ENCODE measurements at regions of chr19 and their contacts with region 1.

Region 1: DNA sequence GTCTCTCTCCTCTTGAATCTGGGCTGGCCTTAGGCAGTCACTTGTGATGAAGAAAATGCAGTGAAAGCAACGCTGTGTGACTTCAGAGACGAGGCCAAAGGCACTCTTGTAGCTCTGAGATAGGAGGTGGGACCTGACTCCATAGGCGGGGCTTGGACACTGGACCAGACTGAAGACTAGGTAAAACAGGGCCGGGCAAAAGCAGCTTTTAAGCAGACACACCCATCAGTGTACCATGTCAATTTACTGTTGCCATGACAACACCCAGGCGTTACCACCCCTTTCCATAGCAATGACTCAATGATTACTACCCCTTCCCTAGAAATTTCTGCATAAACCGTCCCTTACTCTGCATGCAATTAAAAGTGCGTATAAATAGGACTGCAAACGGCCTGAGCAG is 6.6 kb upstream of the EID2 start:
- DNase-seq: no peak
- H3K4me3 Mint-ChIP-seq: no peak overlapping the region
- H3K27ac Mint-ChIP-seq: no peak overlapping the region
- H3K4me1 Mint-ChIP-seq: peaks cover 21% of the 10 kb centered on the region
- H3K27me3 Mint-ChIP-seq: no peaks in the 10 kb centered on the region

Region 2: DNA sequence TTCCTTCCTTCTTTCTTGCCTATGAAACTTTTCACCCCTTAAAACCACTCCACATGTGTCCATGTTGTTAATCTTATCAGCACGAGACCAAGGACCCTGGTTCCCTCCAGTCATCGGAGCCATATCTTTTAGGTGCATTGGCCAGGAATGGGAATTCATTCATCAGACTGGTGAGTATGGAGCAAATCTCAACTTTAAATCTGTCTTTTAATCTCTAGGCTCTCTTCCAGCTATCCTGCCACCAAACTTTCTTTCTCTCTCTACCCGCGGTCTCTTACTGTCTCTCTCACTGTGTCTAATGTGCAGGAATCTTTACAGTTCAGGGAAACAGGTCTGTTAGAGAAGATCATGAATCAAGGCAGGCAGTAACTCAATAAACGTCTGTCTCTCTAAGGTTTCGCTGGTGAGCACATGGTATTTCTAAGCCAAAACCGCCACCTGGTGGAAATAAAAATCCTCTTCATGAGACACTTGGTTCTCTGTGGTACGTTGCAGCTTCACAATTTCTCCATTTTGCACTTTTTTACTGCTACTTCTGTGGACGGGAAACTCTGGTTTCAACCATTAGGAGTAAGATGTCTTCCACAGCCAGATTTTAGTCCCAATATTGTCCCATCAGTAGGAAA is 125.3 kb after region 1 on chr19:
- intact Hi-C with region 1: loop called (anchors 1 kb)
- DNase-seq: peak; percentile 88
- H3K4me3 Mint-ChIP-seq: no peak overlapping the region
- H3K27ac Mint-ChIP-seq: no peak overlapping the region
- H3K4me1 Mint-ChIP-seq: peaks cover 25% of the 10 kb centered on the region
- H3K27me3 Mint-ChIP-seq: peaks cover 14% of the 10 kb centered on the region